Aorta (tissue), 5 donors: ENCODE measurements at regions of chr2 and their contacts with region 1.

Region 1: DNA sequence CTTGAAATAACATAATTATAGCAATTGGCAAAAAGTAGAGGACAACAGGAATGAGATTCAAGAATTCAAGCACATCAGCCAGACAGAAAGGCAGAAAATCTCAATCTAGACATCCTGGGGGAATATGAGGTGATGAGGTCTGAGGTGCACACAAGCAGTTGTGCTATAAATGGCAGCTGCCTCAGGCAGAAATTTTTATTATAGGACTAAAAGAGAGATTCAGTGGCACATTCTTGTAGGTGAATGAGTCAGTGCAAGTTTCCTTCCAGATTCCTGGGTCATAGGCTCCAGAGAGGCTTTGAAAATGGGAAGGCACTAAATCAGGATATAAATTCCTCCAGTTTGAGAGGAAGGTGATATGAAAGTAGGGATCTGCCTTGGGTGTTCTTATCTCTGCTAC is 127.2 kb upstream of the THSD7B start:
- DNase-seq: no peak
- ATAC-seq: no peak
- H3K4me3 ChIP-seq: no peak overlapping the region
- H3K27ac ChIP-seq: no peak overlapping the region
- H3K4me1 ChIP-seq: peaks cover 0 to 11% of the 10 kb centered on the region in 2 donors
- H3K27me3 ChIP-seq: no peaks in the 10 kb centered on the region

Region 2: DNA sequence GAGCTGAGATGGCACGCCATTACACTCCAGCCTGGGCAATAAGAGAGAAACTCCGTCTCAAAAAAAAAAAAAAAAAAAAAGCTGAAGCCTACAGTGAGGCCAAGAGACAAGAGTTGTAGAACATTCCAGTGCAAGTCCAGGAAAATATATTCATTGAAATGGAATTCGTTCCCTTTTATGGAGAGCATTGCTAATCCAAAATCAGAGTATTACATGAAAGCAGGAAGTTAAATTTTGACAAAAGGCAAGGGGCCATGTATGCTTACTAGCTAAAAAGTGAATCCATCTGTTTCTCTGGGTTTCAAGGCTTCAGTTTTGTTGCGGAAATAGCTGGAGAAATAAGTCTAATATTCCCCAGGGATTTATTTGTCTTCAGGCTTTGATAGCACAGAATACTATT is 598.9 kb after region 1 on chr2:
- intact Hi-C with region 1: loop called in 1 of 2 experiments (anchors 10 kb)
- DNase-seq: no peak
- ATAC-seq: peak; percentile 82
- H3K4me3 ChIP-seq: no peak overlapping the region
- H3K27ac ChIP-seq: peak overlapping the region in 1 of 2 donors; percentile 82
- H3K4me1 ChIP-seq: peaks cover 0 to 3% of the 10 kb centered on the region in 2 donors
- H3K27me3 ChIP-seq: no peaks in the 10 kb centered on the region

Region 3: GRCh38 chr2:137302957-137303356 is 664.8 kb after region 1 on chr2:
- intact Hi-C with region 1: no loop called
- DNase-seq: no peak
- ATAC-seq: no peak
- H3K4me3 ChIP-seq: no peak overlapping the region
- H3K27ac ChIP-seq: no peak overlapping the region
- H3K4me1 ChIP-seq: no peaks in the 10 kb centered on the region
- H3K27me3 ChIP-seq: no peaks in the 10 kb centered on the region